SK-N-SH (cell line): ENCODE measurements at regions of chr20 and their contacts with region 1.

Region 1: DNA sequence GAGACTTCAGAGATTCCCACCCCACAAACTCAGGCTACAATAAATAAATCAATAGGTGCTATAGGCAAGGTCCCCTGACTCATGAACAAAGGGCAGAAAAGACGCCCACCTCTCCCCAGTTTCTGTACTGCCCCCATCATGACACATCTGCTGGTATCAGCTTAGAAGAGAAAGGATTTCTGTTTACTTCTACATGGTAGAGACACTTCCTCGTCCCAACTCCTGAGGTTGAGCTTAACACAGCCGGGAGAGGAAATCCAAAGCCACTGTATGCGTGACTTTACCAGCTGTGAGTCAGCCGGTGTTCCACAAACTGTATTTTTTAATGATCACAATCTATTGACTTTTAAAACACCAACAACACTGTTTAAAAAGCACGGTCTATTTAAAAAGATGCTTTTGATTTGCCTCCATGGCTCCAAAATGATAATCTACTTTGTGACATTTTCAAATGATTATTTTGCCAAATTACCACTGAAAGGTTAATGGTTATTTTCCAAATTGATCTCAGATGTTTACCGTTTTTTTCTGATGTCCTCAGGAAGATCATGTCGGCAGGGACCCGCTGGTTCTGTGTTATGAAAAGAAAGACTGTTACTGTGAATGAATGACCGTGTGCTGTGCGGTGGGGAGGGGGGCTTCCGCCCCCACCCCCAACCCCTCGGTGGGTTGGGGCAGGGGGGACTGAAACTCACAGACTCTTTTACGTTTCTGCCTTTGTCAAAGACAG is 72.5 kb downstream of the ATP9A start:
- DNase-seq: peak; percentile 81
- H3K4me3 ChIP-seq: peak overlapping the region; percentile 30 to 35
- H3K27ac ChIP-seq: peak overlapping the region; percentile 69 to 94
- H3K4me1 ChIP-seq: peaks cover 20% of the 10 kb centered on the region in 2 experiments; a peak in 3 of 4 replicates
- H3K27me3 ChIP-seq: no peaks in the 10 kb centered on the region
- CTCF ChIP-seq: no peak
- EP300 ChIP-seq: peak in 1 of 2 experiments; percentile 68; a peak in 3 of 4 replicates
- RAD21 ChIP-seq: no peak; the same call in 1 of the 2 replicates

Region 2: DNA sequence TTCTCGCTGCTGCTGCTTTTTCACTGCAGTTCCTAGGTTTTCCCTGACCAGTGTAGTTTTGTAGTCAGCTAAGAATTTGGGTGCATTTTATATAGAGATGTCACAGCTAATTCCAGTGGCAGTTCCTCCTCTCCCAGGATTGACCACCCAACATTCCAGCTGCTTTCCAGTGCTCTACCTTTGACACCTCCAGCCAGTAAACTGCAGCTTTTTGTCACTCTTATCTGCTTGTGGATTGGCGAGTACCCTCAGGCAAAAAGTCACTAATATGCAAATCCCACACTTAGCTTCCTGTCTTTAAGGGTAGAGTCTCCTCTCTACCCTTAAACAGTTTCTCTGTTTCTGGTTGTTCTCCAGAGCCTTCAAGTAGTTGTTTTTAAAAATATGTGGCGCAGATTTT is 525.9 kb before region 1 on chr20:
- CTCF ChIA-PET with region 1: no interaction called
- POLR2A ChIA-PET with region 1: no interaction called
- DNase-seq: no peak
- H3K4me3 ChIP-seq: no peak overlapping the region
- H3K27ac ChIP-seq: no peak overlapping the region
- H3K4me1 ChIP-seq: peaks cover 0 to 3% of the 10 kb centered on the region in 2 experiments; a peak in 1 of 4 replicates
- H3K27me3 ChIP-seq: peaks cover 5% of the 10 kb centered on the region; the same call in 1 of the 2 replicates
- CTCF ChIP-seq: no peak
- EP300 ChIP-seq: no peak
- RAD21 ChIP-seq: no peak

Region 3: GRCh38 chr20:51715163-51715860 is 19.6 kb after region 1 on chr20:
- CTCF ChIA-PET with region 1: interaction called, 14 read pairs
- POLR2A ChIA-PET with region 1: no interaction called
- DNase-seq: peak; percentile 50
- H3K4me3 ChIP-seq: peak overlapping the region in 1 of 2 experiments; percentile 23; a peak in 2 of 4 replicates
- H3K27ac ChIP-seq: peak overlapping the region in 1 of 2 experiments; percentile 71; a peak in 2 of 4 replicates
- H3K4me1 ChIP-seq: peaks cover 4 to 9% of the 10 kb centered on the region in 2 experiments; a peak in 3 of 4 replicates
- H3K27me3 ChIP-seq: no peaks in the 10 kb centered on the region
- CTCF ChIP-seq: no peak
- EP300 ChIP-seq: no peak
- RAD21 ChIP-seq: no peak

Region 4: GRCh38 chr20:51840631-51841264 is 145.0 kb after region 1 on chr20:
- CTCF ChIA-PET with region 1: no interaction called
- POLR2A ChIA-PET with region 1: no interaction called
- DNase-seq: no peak
- H3K4me3 ChIP-seq: no peak overlapping the region
- H3K27ac ChIP-seq: no peak overlapping the region
- H3K4me1 ChIP-seq: no peaks in the 10 kb centered on the region
- H3K27me3 ChIP-seq: no peaks in the 10 kb centered on the region
- CTCF ChIP-seq: no peak
- EP300 ChIP-seq: no peak
- RAD21 ChIP-seq: no peak